Activated CD8-positive, alpha-beta T cell treated with anti-CD3 and anti-CD28 coated beads for 36 hours (primary cell): ENCODE measurements at regions of chr5 and their contacts with region 1.

Region 1: GRCh38 chr5:151771259-151772028 is at the start of gene G3BP1:
- DNase-seq: peak; percentile 100
- ATAC-seq: peak; percentile 84
- H3K4me3 Mint-ChIP-seq: peak within 1 kb of the TSS; percentile 87
- H3K27ac Mint-ChIP-seq: peak within 1 kb of the TSS; percentile 84
- H3K4me1 Mint-ChIP-seq: peaks cover 31% of the 10 kb centered on the region
- H3K27me3 Mint-ChIP-seq: no peaks in the 10 kb centered on the region
- CTCF ChIP-seq: peak; percentile 25
- total RNA-seq, gene G3BP1: 247 to 253 TPM

Region 2: GRCh38 chr5:151730384-151730783 is 41.1 kb before region 1 on chr5:
- CTCF ChIA-PET with region 1: no interaction called
- POLR2A ChIA-PET with region 1: no interaction called
- intact Hi-C with region 1: no loop called
- DNase-seq: no peak
- ATAC-seq: no peak
- H3K4me3 Mint-ChIP-seq: no peak overlapping the region
- H3K27ac Mint-ChIP-seq: no peak overlapping the region
- H3K4me1 Mint-ChIP-seq: no peaks in the 10 kb centered on the region
- H3K27me3 Mint-ChIP-seq: no peaks in the 10 kb centered on the region
- CTCF ChIP-seq: no peak

Region 3: GRCh38 chr5:151751091-151751490 is 20.4 kb before region 1 on chr5:
- CTCF ChIA-PET with region 1: interaction called, 18 read pairs
- POLR2A ChIA-PET with region 1: interaction called, 82 read pairs
- intact Hi-C with region 1: no loop called
- DNase-seq: no peak
- ATAC-seq: no peak
- H3K4me3 Mint-ChIP-seq: no peak overlapping the region
- H3K27ac Mint-ChIP-seq: no peak overlapping the region
- H3K4me1 Mint-ChIP-seq: peaks cover 33% of the 10 kb centered on the region
- H3K27me3 Mint-ChIP-seq: no peaks in the 10 kb centered on the region
- CTCF ChIP-seq: no peak

Region 4: DNA sequence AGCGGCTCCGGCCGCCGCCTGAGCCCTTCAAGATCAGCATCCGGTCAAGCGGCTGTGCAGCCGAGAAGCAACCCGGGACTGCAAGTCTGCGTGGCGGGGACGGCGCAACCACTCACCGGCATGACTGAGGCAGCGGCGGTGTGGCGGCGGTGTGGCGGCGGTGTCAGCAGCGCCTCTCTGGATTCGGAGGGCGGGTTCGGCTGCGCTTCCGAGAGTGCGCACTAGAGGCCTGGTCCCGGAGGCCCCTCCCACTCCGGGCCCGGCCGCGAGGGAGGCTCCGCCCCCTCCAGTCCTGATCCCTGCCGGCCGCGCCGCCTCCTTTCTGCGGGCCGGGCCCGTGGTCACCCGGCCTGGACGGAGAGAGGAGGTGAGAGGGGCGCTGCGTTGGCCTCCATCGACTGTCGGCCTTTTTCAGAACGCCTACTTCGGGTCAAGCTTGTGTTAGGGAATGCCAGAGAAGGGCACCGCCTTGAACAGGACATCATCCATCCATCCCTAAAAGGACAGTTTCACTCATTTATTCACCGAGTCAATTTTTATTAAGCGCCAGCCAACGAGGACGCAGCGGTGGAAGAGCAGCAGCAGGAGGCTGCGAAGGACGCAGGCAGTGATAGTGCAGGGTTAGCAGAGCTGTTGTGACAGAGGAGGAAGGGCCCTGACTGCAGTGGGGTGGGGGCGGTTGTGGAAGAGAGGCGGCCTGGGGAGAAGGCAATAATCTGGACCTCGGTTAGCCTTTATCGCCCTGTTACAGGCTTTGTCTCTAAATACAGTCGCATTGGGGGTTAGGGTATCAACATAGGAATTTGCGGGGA is 12.8 kb before region 1 on chr5 and contains the start of gene ATOX1:
- CTCF ChIA-PET with region 1: interaction called, 25 read pairs
- POLR2A ChIA-PET with region 1: interaction called, 82 read pairs
- intact Hi-C with region 1: no loop called
- DNase-seq: peak; percentile 90
- ATAC-seq: peak; percentile 99
- H3K4me3 Mint-ChIP-seq: peak within 1 kb of the TSS; percentile 79
- H3K27ac Mint-ChIP-seq: peak within 1 kb of the TSS; percentile 91
- H3K4me1 Mint-ChIP-seq: peaks cover 41% of the 10 kb centered on the region
- H3K27me3 Mint-ChIP-seq: no peaks in the 10 kb centered on the region
- CTCF ChIP-seq: peak; percentile 24
- total RNA-seq, gene ATOX1: 69.6 to 73.3 TPM

Region 5: GRCh38 chr5:151784141-151784540 is 12.7 kb after region 1 on chr5:
- CTCF ChIA-PET with region 1: interaction called, 6 read pairs
- POLR2A ChIA-PET with region 1: interaction called, 20 read pairs
- intact Hi-C with region 1: no loop called
- DNase-seq: no peak
- ATAC-seq: no peak
- H3K4me3 Mint-ChIP-seq: no peak overlapping the region
- H3K27ac Mint-ChIP-seq: peak overlapping the region; percentile 25
- H3K4me1 Mint-ChIP-seq: peaks cover 64% of the 10 kb centered on the region
- H3K27me3 Mint-ChIP-seq: no peaks in the 10 kb centered on the region
- CTCF ChIP-seq: no peak